IMR-90 (cell line): ENCODE measurements at regions of chr5 and their contacts with region 1.

Region 1: DNA sequence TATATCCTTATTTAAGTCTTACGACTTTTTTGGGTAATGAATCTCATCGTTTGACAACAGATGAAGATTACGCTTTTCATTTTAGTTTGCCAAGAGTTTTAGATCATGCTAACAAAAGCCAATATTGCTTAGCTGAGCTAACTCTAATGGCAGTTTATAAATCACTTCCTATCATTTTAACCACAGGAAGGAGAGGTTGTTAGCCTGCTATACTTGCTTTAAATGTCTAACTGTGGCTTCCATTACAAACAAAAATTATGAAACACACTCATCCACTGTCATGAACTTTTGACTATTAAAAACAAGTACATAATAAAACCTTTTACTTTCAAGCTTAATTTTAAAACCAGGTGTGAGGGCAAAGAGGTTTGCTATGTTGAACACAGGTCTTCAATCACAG is 53.7 kb upstream of the ANKH start:
- DNase-seq: peak; percentile 60
- ATAC-seq: no peak
- H3K4me3 ChIP-seq: no peak overlapping the region
- H3K27ac ChIP-seq: no peak overlapping the region
- H3K4me1 ChIP-seq: peaks cover 16% of the 10 kb centered on the region
- H3K27me3 ChIP-seq: no peaks in the 10 kb centered on the region
- CTCF ChIP-seq: no peak
- POLR2A ChIP-seq: no peak
- RAD21 ChIP-seq: no peak

Region 2: GRCh38 chr5:14871210-14872069 is 53.9 kb before region 1 on chr5 and contains the start of gene ANKH:
- CTCF ChIA-PET with region 1: interaction called, 6 read pairs
- POLR2A ChIA-PET with region 1: no interaction called
- dilution Hi-C with region 1: no loop called
- in situ Hi-C with region 1: no loop called
- intact Hi-C with region 1: loop called (anchors 5 kb)
- DNase-seq: peak; percentile 69
- ATAC-seq: peak; percentile 97
- H3K4me3 ChIP-seq: peak within 1 kb of the TSS; percentile 65
- H3K27ac ChIP-seq: peak within 1 kb of the TSS; percentile 89
- H3K4me1 ChIP-seq: peaks cover 2% of the 10 kb centered on the region
- H3K27me3 ChIP-seq: no peaks in the 10 kb centered on the region
- CTCF ChIP-seq: peak; percentile 58
- POLR2A ChIP-seq: peak; percentile 20
- RAD21 ChIP-seq: peak; percentile 38
- total RNA-seq, gene ANKH: 5.2 and 5.6 TPM in 2 replicates

Region 3: DNA sequence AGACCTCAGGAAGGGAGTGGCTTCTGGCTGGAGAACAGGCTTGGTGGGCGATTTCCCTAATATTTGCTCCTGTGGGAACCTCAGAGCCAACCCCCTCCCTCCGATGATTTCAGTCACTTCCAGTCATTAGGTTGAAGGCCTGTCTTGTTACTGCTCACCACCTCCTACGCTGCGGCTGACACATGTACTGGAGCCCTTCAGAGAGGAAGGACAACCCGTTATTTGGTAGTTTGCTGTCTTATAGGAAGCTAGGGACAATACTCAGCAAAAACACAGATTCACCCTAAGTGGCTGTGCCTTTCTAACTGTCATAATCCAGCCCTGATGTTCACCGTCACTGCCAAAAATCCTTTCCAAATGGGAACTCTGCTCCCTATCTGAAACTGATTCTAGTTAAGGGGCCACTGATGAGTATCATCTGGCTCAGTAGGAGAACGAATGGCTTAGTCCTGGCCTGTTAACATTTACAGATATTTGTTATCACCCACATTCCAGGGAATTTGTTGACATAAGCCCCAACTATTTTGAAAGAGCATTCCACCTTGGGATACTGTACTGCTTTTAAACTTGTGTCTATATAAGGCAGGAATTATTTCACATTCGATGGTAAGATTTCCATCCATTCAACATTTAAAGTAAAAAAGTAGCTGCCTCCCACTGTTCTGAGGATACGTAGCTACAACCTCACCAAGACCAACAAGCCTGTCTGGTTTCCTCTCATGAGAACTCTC is 24.4 kb before region 1 on chr5:
- CTCF ChIA-PET with region 1: interaction called, 3 read pairs
- POLR2A ChIA-PET with region 1: no interaction called
- dilution Hi-C with region 1: no loop called
- in situ Hi-C with region 1: no loop called
- intact Hi-C with region 1: loop called (anchors 1 kb)
- DNase-seq: peak; percentile 86
- ATAC-seq: peak; percentile 78
- H3K4me3 ChIP-seq: no peak overlapping the region
- H3K27ac ChIP-seq: peak overlapping the region; percentile 90
- H3K4me1 ChIP-seq: peaks cover 7% of the 10 kb centered on the region
- H3K27me3 ChIP-seq: peaks cover 2% of the 10 kb centered on the region
- CTCF ChIP-seq: no peak
- POLR2A ChIP-seq: no peak
- RAD21 ChIP-seq: no peak

Region 4: GRCh38 chr5:14914603-14915277 is 10.6 kb before region 1 on chr5:
- CTCF ChIA-PET with region 1: no interaction called
- POLR2A ChIA-PET with region 1: no interaction called
- dilution Hi-C with region 1: no loop called
- in situ Hi-C with region 1: no loop called
- intact Hi-C with region 1: loop called (anchors 1 kb)
- DNase-seq: peak; percentile 79
- ATAC-seq: peak; percentile 86
- H3K4me3 ChIP-seq: no peak overlapping the region
- H3K27ac ChIP-seq: no peak overlapping the region
- H3K4me1 ChIP-seq: peaks cover 14% of the 10 kb centered on the region
- H3K27me3 ChIP-seq: no peaks in the 10 kb centered on the region
- CTCF ChIP-seq: no peak
- POLR2A ChIP-seq: no peak
- RAD21 ChIP-seq: no peak

Region 5: DNA sequence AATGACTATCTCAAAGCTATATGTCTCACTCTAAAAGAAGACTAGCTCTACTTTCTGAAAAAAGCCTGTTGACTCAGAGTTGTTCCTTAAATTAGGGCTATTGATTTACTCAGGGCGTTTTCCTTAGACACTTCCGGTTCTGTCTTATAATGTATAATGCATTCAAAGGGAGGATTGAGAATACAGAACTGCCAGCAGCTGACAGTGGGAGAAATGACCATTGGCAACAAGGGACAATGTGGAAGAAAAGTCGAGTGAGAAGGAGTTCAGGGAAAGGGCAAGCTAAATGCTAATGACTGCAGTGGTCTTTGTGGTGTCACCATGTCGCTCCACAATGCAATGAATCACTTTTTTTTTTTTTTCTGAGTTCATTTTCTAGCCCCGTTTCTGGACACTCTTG is 11.9 kb after region 1 on chr5:
- CTCF ChIA-PET with region 1: no interaction called
- POLR2A ChIA-PET with region 1: no interaction called
- dilution Hi-C with region 1: no loop called
- in situ Hi-C with region 1: no loop called
- intact Hi-C with region 1: no loop called
- DNase-seq: no peak
- ATAC-seq: no peak
- H3K4me3 ChIP-seq: no peak overlapping the region
- H3K27ac ChIP-seq: no peak overlapping the region
- H3K4me1 ChIP-seq: no peaks in the 10 kb centered on the region
- H3K27me3 ChIP-seq: peaks cover 7% of the 10 kb centered on the region
- CTCF ChIP-seq: no peak
- POLR2A ChIP-seq: no peak
- RAD21 ChIP-seq: no peak